Cardiac septum (tissue), 1 donor: ENCODE measurements at regions of chr11 and their contacts with region 1.

Region 1: DNA sequence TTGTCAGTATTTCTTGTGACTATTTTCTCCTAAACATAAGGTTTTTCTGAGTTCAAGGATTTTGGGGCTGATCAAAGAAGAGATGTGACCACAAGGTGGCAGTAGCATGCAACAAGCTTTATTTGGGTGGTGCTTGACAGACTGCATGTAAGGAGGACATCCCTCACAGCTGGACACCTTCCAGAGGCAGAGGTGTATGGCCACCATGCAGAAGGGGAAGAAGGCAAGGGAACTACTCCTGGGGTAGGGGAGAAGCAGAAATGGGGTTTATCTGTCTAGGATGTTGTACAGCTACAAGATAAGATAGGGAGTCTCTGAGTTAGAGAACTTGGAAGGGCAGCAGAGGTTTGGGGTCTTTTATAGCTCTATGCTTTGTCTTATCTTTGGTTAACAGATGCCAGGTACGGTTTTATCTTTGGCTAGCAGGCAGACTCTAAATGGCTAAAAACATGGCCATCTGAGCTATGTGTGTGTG is 5.1 kb upstream of the BIRC2 start:
- DNase-seq: no peak

Region 2: GRCh38 chr11:102220728-102221467 is 121.0 kb before region 1 on chr11:
- intact Hi-C with region 1: no loop called
- DNase-seq: no peak

Region 3: DNA sequence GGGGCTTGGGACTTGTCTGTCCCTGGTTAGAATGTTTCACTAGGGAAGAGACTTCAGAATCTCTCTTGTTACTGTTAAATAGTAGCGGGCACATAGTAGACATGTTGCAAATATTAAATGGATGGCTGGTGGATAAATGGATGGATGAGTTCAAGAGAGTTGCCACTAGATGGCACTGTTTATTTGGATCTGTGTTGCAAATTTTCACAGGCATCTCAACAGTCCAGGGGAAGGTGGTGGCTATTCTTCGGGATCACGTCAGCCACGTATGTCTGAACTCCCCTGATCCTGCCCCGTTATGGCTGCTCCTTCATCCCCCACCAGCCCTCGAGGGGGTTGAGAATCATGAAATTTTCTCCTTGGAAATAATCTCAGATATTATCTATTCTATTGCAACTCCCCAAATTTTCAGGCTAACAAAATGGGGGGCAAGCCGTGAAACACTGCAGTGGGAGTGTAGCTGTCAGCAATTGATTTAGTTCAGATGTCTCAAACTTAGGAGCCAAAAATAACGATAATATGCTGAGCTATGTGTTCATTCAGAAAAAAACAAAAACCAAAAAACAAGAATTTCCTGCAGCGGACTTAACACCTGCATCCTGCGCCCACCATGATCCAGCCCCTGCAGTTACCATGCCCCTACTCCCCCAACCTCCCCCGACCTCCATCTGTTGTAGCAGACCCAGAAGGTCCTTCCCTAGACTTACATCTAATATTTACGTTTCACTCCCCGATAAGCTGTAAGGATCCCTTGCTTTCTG is 53.7 kb before region 1 on chr11:
- intact Hi-C with region 1: loop called (anchors 5 kb)
- DNase-seq: no peak